Gastrocnemius medialis (tissue), 4 donors: ENCODE measurements at regions of chr6 and their contacts with region 1.

Region 1: DNA sequence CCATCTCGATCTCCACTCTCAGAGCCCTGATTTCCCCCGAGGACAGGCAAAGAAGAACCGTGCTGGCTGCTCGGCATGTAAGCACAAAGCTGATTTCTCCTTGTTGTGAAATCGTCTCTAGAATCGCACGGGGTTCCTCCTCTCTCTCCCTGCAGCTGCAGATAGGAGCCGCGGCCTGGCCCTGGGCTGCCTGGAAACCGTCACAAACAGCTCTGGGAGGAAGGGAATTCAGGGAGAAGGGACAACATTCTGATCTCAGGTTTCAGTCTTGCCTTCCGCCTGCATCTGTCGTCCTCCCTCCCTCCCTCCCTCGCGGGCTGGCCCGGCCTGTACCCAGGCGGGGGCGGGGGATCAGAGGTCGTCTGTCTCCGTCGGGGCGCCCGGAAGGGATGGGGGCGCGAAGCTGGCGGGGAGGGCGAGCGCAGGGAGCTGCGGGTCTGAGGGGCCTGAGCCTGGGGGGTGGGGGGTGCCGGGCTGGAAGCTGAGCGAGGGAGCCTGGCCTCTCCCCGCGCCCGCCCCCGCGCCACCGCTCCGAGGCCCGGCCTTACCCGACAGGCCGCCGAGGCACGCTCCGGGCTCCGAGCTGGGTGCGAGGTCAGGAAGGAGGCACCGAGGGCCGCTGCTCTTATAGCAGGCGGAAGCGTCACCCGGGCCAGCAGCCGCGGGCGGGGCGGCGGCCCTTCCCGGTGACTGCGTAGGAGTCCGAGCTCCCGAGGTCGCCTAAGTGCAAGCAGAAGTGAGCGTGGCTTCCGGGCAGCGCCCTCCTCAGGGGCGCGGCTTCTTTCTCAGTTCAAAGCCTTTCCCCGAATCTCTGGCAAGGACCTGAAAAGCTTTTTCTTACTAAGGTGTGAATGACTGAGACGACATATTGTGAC is at the start of gene SERPINB1:
- DNase-seq: peak; percentile 83 to 91
- ATAC-seq: peak; percentile 94 to 95
- H3K4me3 ChIP-seq: peak within 1 kb of the TSS; percentile 63 to 76 (median 65)
- H3K27ac ChIP-seq: peak within 1 kb of the TSS; percentile 90 to 96 (median 96)
- H3K4me1 ChIP-seq: peaks cover 31 to 37% of the 10 kb centered on the region in 2 donors
- H3K27me3 ChIP-seq: no peaks in the 10 kb centered on the region
- CTCF ChIP-seq: peak in 3 of 5 experiments; percentile 17 to 25 (median 25)
- POLR2A ChIP-seq: peak; percentile 65 to 71
- total RNA-seq, gene SERPINB1: 14.0 to 29.9 (median 24.9) TPM

Region 2: GRCh38 chr6:2765166-2765895 is 76.2 kb before region 1 on chr6 and contains the start of gene WRNIP1:
- in situ Hi-C with region 1: no loop called
- intact Hi-C with region 1: loop called (anchors 2 kb)
- DNase-seq: peak; percentile 98 to 100
- ATAC-seq: peak; percentile 87 to 90
- H3K4me3 ChIP-seq: peak within 1 kb of the TSS; percentile 62 to 88 (median 74)
- H3K27ac ChIP-seq: peak within 1 kb of the TSS; percentile 85 to 96 (median 91)
- H3K4me1 ChIP-seq: peaks cover 39 to 47% of the 10 kb centered on the region in 2 donors
- H3K27me3 ChIP-seq: no peaks in the 10 kb centered on the region
- CTCF ChIP-seq: peak; percentile 56 to 81 (median 75)
- POLR2A ChIP-seq: peak; percentile 90 to 92
- total RNA-seq, gene WRNIP1: 51.9 to 66.0 (median 57.3) TPM

Region 3: GRCh38 chr6:2791124-2791974 is 50.2 kb before region 1 on chr6:
- in situ Hi-C with region 1: loop called in 3 of 4 experiments (anchors 10 kb)
- intact Hi-C with region 1: loop called (anchors 1 kb)
- DNase-seq: peak; percentile 61 to 78
- ATAC-seq: peak; percentile 84 to 85
- H3K4me3 ChIP-seq: peak overlapping the region in 3 of 4 donors; percentile 24 to 29 (median 27)
- H3K27ac ChIP-seq: peak overlapping the region; percentile 78 to 80 (median 79)
- H3K4me1 ChIP-seq: peaks cover 23 to 31% of the 10 kb centered on the region in 2 donors
- H3K27me3 ChIP-seq: no peaks in the 10 kb centered on the region
- CTCF ChIP-seq: peak; percentile 74 to 84 (median 78)
- POLR2A ChIP-seq: no peak

Region 4: GRCh38 chr6:2931970-2932748 is 90.7 kb after region 1 on chr6:
- in situ Hi-C with region 1: loop called (anchors 5 to 10 kb)
- intact Hi-C with region 1: loop called (anchors 1 kb)
- DNase-seq: peak; percentile 72 to 88
- ATAC-seq: peak; percentile 99 to 100
- H3K4me3 ChIP-seq: peak overlapping the region in 1 of 4 donors; percentile 6
- H3K27ac ChIP-seq: peak overlapping the region; percentile 33 to 59 (median 54)
- H3K4me1 ChIP-seq: peaks cover 4 to 5% of the 10 kb centered on the region in 2 donors
- H3K27me3 ChIP-seq: no peaks in the 10 kb centered on the region
- CTCF ChIP-seq: peak; percentile 87 to 98 (median 91)
- POLR2A ChIP-seq: no peak

Region 5: DNA sequence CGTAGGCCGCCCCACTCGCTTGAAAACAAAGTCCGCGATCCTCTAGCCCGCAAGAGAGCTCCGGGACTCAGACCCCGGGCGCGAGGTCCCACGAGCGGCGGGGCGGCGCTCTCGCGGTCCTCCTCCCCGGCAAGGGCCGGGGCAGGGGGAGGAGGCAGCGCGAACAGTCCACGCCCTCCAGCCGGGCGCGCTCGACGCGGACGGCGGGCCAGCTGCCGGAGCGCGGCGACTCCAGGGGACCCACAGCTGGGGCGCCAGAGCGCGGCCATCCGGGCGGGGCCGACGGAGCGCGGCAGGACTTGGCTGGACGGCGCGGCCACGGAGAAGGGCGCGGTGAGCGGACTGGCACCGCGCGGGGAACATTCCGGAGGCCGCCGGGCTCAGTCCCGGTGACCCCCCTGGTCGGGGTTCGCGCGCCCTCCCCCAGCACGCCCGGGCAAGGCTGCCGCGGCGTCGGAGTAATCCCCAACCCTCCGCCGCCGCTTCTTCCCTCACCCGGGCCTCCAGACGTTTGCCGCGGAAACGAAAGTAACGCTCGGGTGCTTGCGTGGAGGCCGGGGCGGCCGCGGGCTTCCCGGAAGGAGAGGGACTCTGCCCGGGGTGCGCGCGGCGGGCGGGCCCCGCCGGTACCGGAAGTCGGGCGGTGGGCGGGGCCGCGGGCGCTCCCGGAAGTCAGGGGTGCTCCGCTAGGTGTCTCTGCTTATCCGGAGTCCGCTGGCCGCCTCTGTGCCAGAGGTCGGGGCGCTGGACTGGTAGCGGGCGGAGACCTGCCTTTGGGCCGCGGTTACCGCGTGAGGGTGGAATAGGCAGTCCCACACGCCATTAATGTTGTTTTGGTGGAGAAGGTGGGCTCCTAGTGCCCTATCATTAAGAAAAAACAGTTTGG is 227.1 kb after region 1 on chr6 and contains the start of gene RIPK1:
- in situ Hi-C with region 1: loop called in 3 of 4 experiments (anchors 10 to 25 kb)
- intact Hi-C with region 1: no loop called
- DNase-seq: peak; percentile 91 to 95
- ATAC-seq: peak; percentile 87 to 89
- H3K4me3 ChIP-seq: peak within 1 kb of the TSS; percentile 59 to 97 (median 77)
- H3K27ac ChIP-seq: peak within 1 kb of the TSS; percentile 91 to 100 (median 96)
- H3K4me1 ChIP-seq: peaks cover 29 to 36% of the 10 kb centered on the region in 2 donors
- H3K27me3 ChIP-seq: no peaks in the 10 kb centered on the region
- CTCF ChIP-seq: peak in 3 of 5 experiments; percentile 16 to 45 (median 35)
- POLR2A ChIP-seq: peak; percentile 95 to 98
- total RNA-seq, gene RIPK1: 8.6 to 12.0 (median 10.3) TPM

Region 6: GRCh38 chr6:3913077-3913957 is 1071.8 kb after region 1 on chr6:
- in situ Hi-C with region 1: no loop called
- intact Hi-C with region 1: loop called (anchors 10 kb)
- DNase-seq: peak; percentile 73 to 74
- ATAC-seq: peak; percentile 92 to 93
- H3K4me3 ChIP-seq: peak overlapping the region in 1 of 4 donors; percentile 11
- H3K27ac ChIP-seq: peak overlapping the region; percentile 85 to 92 (median 88)
- H3K4me1 ChIP-seq: peaks cover 55 to 61% of the 10 kb centered on the region in 2 donors
- H3K27me3 ChIP-seq: no peaks in the 10 kb centered on the region
- CTCF ChIP-seq: no peak
- POLR2A ChIP-seq: no peak